ENCODE measurements at regions of chr4 and their contacts with region 1.

Region 1: GRCh38 chr4:176479767-176480166 is 160.0 kb downstream of the SPCS3 start:
- DNase-seq: no peak
- H3K4me3 Mint-ChIP-seq: no peak overlapping the region
- H3K27ac Mint-ChIP-seq: peak overlapping the region; percentile 21
- H3K4me1 Mint-ChIP-seq: peaks cover 4% of the 10 kb centered on the region
- H3K27me3 Mint-ChIP-seq: no peaks in the 10 kb centered on the region

Region 2: DNA sequence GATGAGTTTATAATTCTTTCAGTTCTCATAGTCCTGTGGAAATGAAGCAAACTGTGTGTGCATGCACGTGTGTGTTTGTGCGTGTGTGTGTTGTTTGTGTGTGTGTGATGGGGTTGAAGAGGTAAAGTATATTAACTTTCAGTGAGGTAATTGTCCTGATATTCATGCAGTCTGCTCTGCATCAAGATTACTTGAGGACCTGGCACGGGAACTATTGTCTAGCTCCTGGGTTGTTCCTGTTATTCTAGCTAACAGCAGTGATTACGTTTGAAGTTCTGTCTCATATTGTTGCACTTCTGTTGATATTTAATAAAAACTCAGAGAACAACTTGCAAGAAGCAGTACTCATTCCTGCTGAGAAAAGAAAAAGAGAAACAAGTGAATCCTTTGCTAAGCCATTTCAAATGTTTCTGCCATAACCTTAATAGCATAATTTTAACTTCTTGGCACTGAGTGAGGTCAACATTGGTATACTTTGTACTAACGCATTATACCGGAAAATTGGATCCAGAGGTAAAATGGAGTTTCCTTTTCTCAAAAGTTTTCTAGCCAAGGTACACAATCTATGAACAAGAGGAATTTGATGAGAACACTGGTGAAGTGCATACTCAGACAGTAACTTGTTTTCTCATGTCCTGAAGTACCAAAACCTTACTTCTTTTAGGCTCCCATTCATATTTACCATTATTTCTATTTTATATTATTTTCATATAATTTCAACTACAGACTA is 46.8 kb before region 1 on chr4:
- intact Hi-C with region 1: no loop called
- DNase-seq: no peak
- H3K4me3 Mint-ChIP-seq: no peak overlapping the region
- H3K27ac Mint-ChIP-seq: no peak overlapping the region
- H3K4me1 Mint-ChIP-seq: peaks cover 4% of the 10 kb centered on the region
- H3K27me3 Mint-ChIP-seq: no peaks in the 10 kb centered on the region

Region 3: GRCh38 chr4:176464748-176465147 is 15.0 kb before region 1 on chr4:
- intact Hi-C with region 1: loop called (anchors 2 kb)
- DNase-seq: no peak
- H3K4me3 Mint-ChIP-seq: no peak overlapping the region
- H3K27ac Mint-ChIP-seq: no peak overlapping the region
- H3K4me1 Mint-ChIP-seq: peaks cover 5% of the 10 kb centered on the region
- H3K27me3 Mint-ChIP-seq: no peaks in the 10 kb centered on the region

Region 4: GRCh38 chr4:176508780-176509331 is 29.1 kb after region 1 on chr4:
- intact Hi-C with region 1: no loop called
- DNase-seq: no peak
- H3K4me3 Mint-ChIP-seq: no peak overlapping the region
- H3K27ac Mint-ChIP-seq: no peak overlapping the region
- H3K4me1 Mint-ChIP-seq: no peaks in the 10 kb centered on the region
- H3K27me3 Mint-ChIP-seq: no peaks in the 10 kb centered on the region

Region 5: DNA sequence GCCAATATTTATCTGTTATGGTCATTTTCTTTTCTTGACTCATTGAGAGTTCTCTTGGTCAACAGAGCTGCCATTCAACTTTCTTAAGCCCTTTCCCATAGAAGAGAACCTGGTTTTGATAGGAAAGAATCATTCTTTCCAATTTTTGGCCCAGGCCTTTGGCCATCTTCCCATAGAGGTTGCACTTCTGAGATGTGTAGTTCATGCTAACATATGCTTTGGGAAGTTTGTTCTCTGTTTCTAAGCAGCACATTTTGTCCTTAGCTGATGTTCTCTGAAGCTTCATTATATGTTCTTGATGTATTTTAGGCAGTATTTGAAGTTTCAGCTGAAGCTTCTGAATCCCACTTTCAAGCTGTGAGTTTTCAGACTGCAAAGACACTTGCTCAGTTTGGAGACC is 151.8 kb after region 1 on chr4:
- intact Hi-C with region 1: no loop called
- DNase-seq: no peak
- H3K4me3 Mint-ChIP-seq: no peak overlapping the region
- H3K27ac Mint-ChIP-seq: no peak overlapping the region
- H3K4me1 Mint-ChIP-seq: no peaks in the 10 kb centered on the region
- H3K27me3 Mint-ChIP-seq: no peaks in the 10 kb centered on the region